Upper lobe of right lung (tissue), 1 donor: ENCODE measurements at regions of chr18 and their contacts with region 1.

Region 1: GRCh38 chr18:76875390-76876325 is 53.3 kb downstream of the ZNF236 start:
- DNase-seq: no peak
- ATAC-seq: peak; percentile 84
- H3K4me3 ChIP-seq: no peak overlapping the region
- H3K27ac ChIP-seq: no peak overlapping the region
- H3K4me1 ChIP-seq: no peaks in the 10 kb centered on the region
- H3K27me3 ChIP-seq: no peaks in the 10 kb centered on the region
- CTCF ChIP-seq: peak; percentile 59

Region 2: GRCh38 chr18:76803814-76804213 is 71.8 kb before region 1 on chr18:
- intact Hi-C with region 1: loop called (anchors 10 kb)
- DNase-seq: no peak
- ATAC-seq: peak; percentile 83
- H3K4me3 ChIP-seq: no peak overlapping the region
- H3K27ac ChIP-seq: no peak overlapping the region
- H3K4me1 ChIP-seq: peaks cover 9% of the 10 kb centered on the region
- H3K27me3 ChIP-seq: peaks cover 9% of the 10 kb centered on the region
- CTCF ChIP-seq: peak; percentile 79

Region 3: GRCh38 chr18:76937597-76937996 is 61.9 kb after region 1 on chr18:
- intact Hi-C with region 1: no loop called
- DNase-seq: no peak
- ATAC-seq: no peak
- H3K4me3 ChIP-seq: no peak overlapping the region
- H3K27ac ChIP-seq: no peak overlapping the region
- H3K4me1 ChIP-seq: no peaks in the 10 kb centered on the region
- H3K27me3 ChIP-seq: no peaks in the 10 kb centered on the region
- CTCF ChIP-seq: no peak

Region 4: GRCh38 chr18:76963936-76964335 is 88.3 kb after region 1 on chr18:
- intact Hi-C with region 1: no loop called
- DNase-seq: no peak
- ATAC-seq: no peak
- H3K4me3 ChIP-seq: no peak overlapping the region
- H3K27ac ChIP-seq: no peak overlapping the region
- H3K4me1 ChIP-seq: no peaks in the 10 kb centered on the region
- H3K27me3 ChIP-seq: no peaks in the 10 kb centered on the region
- CTCF ChIP-seq: no peak